Vagina (tissue), 2 donors: ENCODE measurements at regions of chr3 and their contacts with region 1.

Region 1: GRCh38 chr3:105868742-105869530 is at the start of gene CBLB:
- DNase-seq: peak; percentile 97
- H3K4me3 ChIP-seq: peak within 1 kb of the TSS; percentile 87 to 91
- H3K27ac ChIP-seq: peak within 1 kb of the TSS; percentile 98
- H3K4me1 ChIP-seq: peaks cover 40% of the 10 kb centered on the region
- H3K27me3 ChIP-seq: no peaks in the 10 kb centered on the region
- CTCF ChIP-seq: peak in 1 of 3 experiments; percentile 7
- POLR2A ChIP-seq: peak in 1 of 2 donors; percentile 86
- total RNA-seq, gene CBLB: 58.4 TPM

Region 2: DNA sequence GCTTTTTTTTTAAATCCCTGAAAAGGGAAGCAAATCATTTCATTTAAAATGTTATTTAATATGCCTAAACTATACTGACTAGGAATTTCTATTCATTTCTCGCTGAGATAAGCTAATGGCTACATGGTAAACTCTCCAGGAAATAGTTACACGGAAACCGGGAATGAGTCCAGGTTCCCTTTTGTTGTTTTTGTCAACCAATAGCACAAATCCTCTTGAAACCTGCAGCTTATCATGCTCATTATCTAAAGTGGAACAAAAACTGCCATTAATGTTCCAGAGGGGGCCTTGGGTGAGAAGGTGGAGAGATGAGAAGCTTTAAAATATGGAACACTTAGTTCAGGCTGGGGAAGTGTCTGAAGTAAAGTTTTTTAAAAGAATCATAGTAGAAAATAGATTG is 615.7 kb before region 1 on chr3:
- intact Hi-C with region 1: no loop called
- DNase-seq: no peak
- H3K4me3 ChIP-seq: no peak overlapping the region
- H3K27ac ChIP-seq: no peak overlapping the region
- H3K4me1 ChIP-seq: no peaks in the 10 kb centered on the region
- H3K27me3 ChIP-seq: no peaks in the 10 kb centered on the region
- CTCF ChIP-seq: no peak
- POLR2A ChIP-seq: no peak

Region 3: GRCh38 chr3:105791919-105792786 is 76.8 kb before region 1 on chr3:
- intact Hi-C with region 1: loop called (anchors 2 kb)
- DNase-seq: peak in 1 of 2 donors; percentile 98
- H3K4me3 ChIP-seq: no peak overlapping the region
- H3K27ac ChIP-seq: peak overlapping the region; percentile 78
- H3K4me1 ChIP-seq: peaks cover 51% of the 10 kb centered on the region
- H3K27me3 ChIP-seq: no peaks in the 10 kb centered on the region
- CTCF ChIP-seq: no peak
- POLR2A ChIP-seq: no peak

Region 4: DNA sequence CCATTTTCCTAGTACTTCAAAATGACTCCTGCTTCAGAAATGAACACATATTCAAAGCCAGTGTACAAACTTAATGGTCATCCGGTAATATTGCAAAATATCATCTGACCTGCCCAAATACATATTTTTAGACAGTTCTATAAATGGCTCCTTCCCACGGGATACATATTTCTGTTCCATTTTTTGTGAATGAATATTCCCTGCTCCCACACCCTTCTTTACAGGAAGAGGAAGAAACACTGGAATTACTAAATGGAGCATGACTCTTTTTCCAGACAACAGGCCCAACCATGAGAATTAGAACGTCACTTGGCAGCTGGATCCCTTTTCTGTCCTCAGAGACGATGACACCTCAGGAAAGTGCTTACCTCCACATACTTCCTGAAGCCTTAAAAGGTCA is 37.9 kb after region 1 on chr3:
- intact Hi-C with region 1: loop called (anchors 2 kb)
- DNase-seq: peak in 1 of 2 donors; percentile 92
- H3K4me3 ChIP-seq: no peak overlapping the region
- H3K27ac ChIP-seq: peak overlapping the region; percentile 66
- H3K4me1 ChIP-seq: peaks cover 10% of the 10 kb centered on the region
- H3K27me3 ChIP-seq: no peaks in the 10 kb centered on the region
- CTCF ChIP-seq: no peak
- POLR2A ChIP-seq: no peak

Region 5: DNA sequence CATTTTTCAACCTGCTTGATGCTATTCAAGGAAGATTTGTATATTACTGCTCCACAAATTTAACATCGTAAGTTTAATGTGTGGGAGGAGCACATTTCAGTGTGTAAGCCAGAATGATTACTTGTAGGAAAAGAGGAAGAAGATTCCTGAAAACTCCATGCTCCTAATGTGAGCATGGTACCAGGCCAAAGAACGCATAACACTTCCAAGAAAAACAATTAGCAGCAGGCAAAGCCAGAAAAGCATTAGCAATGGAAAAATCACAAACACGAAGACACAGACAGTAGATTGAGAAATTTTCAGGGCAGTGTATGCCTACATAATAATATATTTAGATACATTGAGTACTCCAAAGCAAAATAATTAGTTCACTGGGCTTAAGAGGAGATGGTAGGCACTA is 96.4 kb after region 1 on chr3:
- intact Hi-C with region 1: loop called (anchors 10 kb)
- DNase-seq: no peak
- H3K4me3 ChIP-seq: no peak overlapping the region
- H3K27ac ChIP-seq: no peak overlapping the region
- H3K4me1 ChIP-seq: peaks cover 20% of the 10 kb centered on the region
- H3K27me3 ChIP-seq: no peaks in the 10 kb centered on the region
- CTCF ChIP-seq: no peak
- POLR2A ChIP-seq: no peak

Region 6: GRCh38 chr3:106058475-106058874 is 189.5 kb after region 1 on chr3:
- intact Hi-C with region 1: no loop called
- DNase-seq: no peak
- H3K4me3 ChIP-seq: no peak overlapping the region
- H3K27ac ChIP-seq: no peak overlapping the region
- H3K4me1 ChIP-seq: no peaks in the 10 kb centered on the region
- H3K27me3 ChIP-seq: no peaks in the 10 kb centered on the region
- CTCF ChIP-seq: no peak
- POLR2A ChIP-seq: no peak

Region 7: DNA sequence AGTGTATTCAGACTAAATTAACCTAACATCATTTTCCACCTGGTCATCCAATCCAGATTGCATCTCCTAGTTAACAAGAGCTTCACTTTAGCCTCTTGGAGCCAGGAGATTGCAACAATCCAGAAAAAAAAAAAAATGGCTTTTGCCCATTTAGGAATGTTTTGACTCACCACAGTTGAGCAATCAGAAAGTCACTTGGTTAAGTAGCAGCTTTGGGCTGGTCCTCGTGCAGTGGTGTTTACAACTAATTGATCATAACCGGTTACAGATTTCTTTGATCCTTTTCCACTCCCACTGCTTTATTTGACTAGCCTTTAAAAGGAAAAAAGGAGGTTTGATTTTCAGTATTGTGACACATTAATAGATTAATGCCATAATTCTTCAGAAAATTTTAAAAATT is 819.5 kb after region 1 on chr3:
- intact Hi-C with region 1: no loop called
- DNase-seq: no peak
- H3K4me3 ChIP-seq: no peak overlapping the region
- H3K27ac ChIP-seq: no peak overlapping the region
- H3K4me1 ChIP-seq: no peaks in the 10 kb centered on the region
- H3K27me3 ChIP-seq: no peaks in the 10 kb centered on the region
- CTCF ChIP-seq: no peak
- POLR2A ChIP-seq: no peak